Ascending aorta (tissue), 2 donors: ENCODE measurements at regions of chr9 and their contacts with region 1.

Region 1: GRCh38 chr9:109918339-109919163 is 138.6 kb downstream of the PALM2AKAP2 start:
- DNase-seq: no peak
- H3K4me3 ChIP-seq: no peak overlapping the region
- H3K27ac ChIP-seq: no peak overlapping the region
- H3K4me1 ChIP-seq: peaks cover 0 to 18% of the 10 kb centered on the region in 2 donors
- H3K27me3 ChIP-seq: no peaks in the 10 kb centered on the region
- CTCF ChIP-seq: no peak

Region 2: DNA sequence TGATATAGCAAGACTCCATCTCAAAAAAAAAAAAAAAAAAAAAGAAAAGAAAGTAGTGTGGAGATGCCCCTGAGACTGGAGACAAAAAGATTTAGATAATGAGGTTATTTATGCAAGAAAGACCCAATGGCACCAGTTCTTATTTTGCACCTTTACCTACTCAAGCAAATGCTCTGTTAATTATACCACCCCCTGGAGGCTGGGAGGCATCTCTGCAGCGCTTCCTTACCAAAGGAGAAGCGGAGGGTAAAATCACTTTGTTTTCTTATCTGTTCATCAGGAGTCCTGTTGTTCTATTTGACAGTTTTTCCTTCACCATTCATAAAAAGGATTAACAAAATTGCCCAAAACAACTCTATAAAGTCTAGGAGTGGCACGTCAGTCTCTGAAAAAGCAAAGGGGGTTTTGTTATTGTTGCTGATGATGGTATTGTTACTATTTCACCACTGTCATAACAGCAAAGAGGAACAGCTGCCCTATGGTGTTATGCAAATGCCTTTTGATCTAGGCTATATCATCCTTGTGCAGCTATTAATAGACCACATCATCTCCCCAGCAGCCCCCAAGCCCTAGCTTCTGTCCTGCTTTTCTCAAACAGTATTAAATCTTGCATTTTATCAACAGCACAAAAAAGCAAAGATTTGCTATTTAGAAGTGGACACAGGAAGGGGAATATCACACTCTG is 35.4 kb after region 1 on chr9:
- intact Hi-C with region 1: loop called (anchors 5 kb)
- DNase-seq: no peak
- H3K4me3 ChIP-seq: no peak overlapping the region
- H3K27ac ChIP-seq: no peak overlapping the region
- H3K4me1 ChIP-seq: peaks cover 0 to 18% of the 10 kb centered on the region in 2 donors
- H3K27me3 ChIP-seq: no peaks in the 10 kb centered on the region
- CTCF ChIP-seq: no peak

Region 3: GRCh38 chr9:110152704-110153374 is 234.3 kb after region 1 on chr9:
- intact Hi-C with region 1: no loop called
- DNase-seq: no peak
- H3K4me3 ChIP-seq: no peak overlapping the region
- H3K27ac ChIP-seq: peak overlapping the region; percentile 3 to 23
- H3K4me1 ChIP-seq: peaks cover 14 to 54% of the 10 kb centered on the region in 2 donors
- H3K27me3 ChIP-seq: no peaks in the 10 kb centered on the region
- CTCF ChIP-seq: peak; percentile 46 to 79 (median 49)